HCT116 (cell line): ENCODE measurements at regions of chr2 and their contacts with region 1.

Region 1: DNA sequence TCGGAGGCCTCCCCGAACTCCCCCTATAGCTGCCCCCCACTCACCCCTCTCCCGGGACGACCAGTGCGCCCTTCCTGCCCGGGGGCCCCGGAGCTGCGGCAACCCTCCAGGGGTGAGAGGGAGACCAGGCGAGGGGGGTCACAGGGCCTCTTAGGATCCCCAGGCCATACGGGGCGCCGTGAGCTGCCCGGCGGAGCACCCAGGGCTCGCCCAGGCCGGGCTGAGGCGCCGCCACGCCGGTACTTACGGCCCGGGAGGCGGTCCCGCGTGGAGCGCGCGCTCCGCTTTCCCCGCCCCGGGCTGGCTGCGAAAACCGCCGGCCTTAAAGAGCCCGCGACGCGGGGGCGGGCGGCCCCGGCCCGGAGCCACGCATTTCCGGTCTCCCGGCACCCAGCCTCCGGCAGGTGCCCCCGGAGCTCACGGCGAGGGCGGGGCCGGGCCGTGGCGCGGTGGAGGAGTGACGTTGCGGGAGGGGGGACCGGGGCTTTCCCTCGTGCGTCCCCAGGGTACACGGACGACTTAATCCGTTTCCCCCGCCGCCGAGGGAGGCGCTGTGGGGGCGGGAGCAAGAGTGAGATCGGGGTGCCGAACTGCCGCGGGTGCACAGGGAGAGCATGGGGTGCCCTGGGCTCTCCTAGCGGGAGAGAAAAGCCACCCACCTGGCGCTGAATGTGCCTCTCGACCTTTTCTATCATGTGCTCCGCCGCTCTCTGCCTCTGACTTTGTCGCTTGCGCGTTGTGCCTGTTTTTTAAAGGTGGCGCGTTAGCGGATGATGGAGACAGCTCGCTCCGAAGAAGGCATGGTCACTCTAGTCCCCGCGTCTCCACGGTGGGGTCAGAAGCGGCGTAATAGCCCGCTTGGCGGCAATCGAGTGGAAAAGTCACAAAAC is at the start of gene METTL21A:
- DNase-seq: peak; percentile 77
- ATAC-seq: peak; percentile 72
- H3K4me3 ChIP-seq: peak within 1 kb of the TSS; percentile 79 to 94
- H3K27ac ChIP-seq: peak within 1 kb of the TSS; percentile 88
- H3K4me1 ChIP-seq: peaks cover 8 to 30% of the 10 kb centered on the region in 2 experiments; a peak in 3 of 4 replicates
- H3K27me3 ChIP-seq: no peaks in the 10 kb centered on the region
- CTCF ChIP-seq: peak in 2 of 3 experiments; percentile 14 to 32; a peak in 2 of 6 replicates
- POLR2A ChIP-seq: peak; percentile 45
- RAD21 ChIP-seq: peak; percentile 7; the same call in 1 of the 2 replicates
- total RNA-seq, gene METTL21A: 25.7 TPM

Region 2: DNA sequence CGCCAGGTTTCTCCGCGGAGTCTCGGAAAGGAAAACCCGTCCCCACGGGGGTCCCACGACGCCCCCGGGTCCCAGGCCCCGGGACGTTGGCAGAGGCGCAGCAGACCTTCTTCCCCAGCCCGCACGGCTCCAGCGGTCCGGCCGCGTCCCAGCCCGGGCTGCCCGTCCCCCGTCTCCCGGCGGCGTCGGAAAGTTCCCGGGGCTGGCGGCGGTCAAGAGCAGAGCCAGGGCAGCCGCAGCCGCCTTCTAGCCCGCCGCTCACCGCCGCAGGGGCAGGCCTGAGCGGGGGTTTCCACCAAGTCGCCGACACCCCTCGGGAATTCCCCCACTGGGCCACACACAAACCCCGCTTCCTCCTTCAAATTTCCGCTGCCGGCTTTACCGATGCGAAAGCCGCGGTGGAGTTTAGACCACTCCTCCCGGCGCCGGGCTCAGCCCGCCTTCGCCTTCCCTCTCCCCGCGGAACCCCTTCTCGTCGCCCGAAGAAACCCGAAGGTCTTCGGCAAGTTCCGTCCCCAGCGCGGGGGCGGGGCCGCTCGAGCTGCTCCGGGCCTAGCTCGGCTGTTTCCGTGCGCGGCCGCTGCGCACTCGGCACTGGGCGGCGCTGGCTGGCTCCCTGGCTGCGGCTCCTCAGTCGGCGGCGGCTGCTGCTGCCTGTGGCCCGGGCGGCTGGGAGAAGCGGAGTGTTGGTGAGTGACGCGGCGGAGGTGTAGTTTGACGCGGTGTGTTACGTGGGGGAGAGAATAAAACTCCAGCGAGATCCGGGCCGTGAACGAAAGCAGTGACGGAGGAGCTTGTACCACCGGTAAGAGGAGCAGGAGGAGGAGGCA is 95.7 kb before region 1 on chr2 and contains the start of gene CREB1:
- CTCF ChIA-PET with region 1: no interaction called
- POLR2A ChIA-PET with region 1: interaction called, 5 read pairs
- RAD21 ChIA-PET with region 1: no interaction called
- intact Hi-C with region 1: loop called (anchors 2 kb)
- DNase-seq: peak; percentile 92
- ATAC-seq: peak; percentile 92
- H3K4me3 ChIP-seq: peak within 1 kb of the TSS; percentile 81 to 91
- H3K27ac ChIP-seq: peak within 1 kb of the TSS; percentile 91
- H3K4me1 ChIP-seq: peaks cover 5 to 27% of the 10 kb centered on the region in 2 experiments
- H3K27me3 ChIP-seq: no peaks in the 10 kb centered on the region
- CTCF ChIP-seq: no peak
- POLR2A ChIP-seq: peak; percentile 75
- RAD21 ChIP-seq: peak; percentile 12; the same call in 1 of the 2 replicates
- total RNA-seq, gene CREB1: 60.4 TPM

Region 3: GRCh38 chr2:207725873-207726578 is 100.8 kb after region 1 on chr2:
- CTCF ChIA-PET with region 1: interaction called, 13 read pairs
- POLR2A ChIA-PET with region 1: no interaction called
- RAD21 ChIA-PET with region 1: no interaction called
- intact Hi-C with region 1: loop called (anchors 5 kb)
- DNase-seq: no peak
- ATAC-seq: no peak
- H3K4me3 ChIP-seq: no peak overlapping the region
- H3K27ac ChIP-seq: no peak overlapping the region
- H3K4me1 ChIP-seq: peaks cover 48 to 60% of the 10 kb centered on the region in 2 experiments
- H3K27me3 ChIP-seq: no peaks in the 10 kb centered on the region
- CTCF ChIP-seq: no peak
- POLR2A ChIP-seq: no peak
- RAD21 ChIP-seq: no peak

Region 4: DNA sequence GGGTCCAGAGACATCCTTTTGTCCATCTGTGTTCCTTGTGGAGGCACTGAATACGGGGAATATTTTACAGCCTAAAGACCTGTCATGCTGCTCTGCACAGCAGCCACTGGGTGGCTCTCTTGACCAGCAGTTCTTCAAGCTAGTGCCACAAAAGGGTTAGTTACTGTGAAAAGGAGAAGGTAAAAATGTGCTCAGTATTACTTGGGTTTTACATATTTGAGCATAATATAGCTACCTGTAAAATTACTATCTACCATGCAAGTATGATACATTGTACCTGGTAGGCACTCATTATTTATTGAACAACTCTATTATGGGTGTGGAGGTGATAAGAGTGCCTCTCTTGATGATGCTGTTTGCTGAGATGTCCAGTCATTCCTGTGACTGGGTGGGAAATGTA is 120.9 kb after region 1 on chr2:
- CTCF ChIA-PET with region 1: interaction called, 11 read pairs
- POLR2A ChIA-PET with region 1: no interaction called
- RAD21 ChIA-PET with region 1: no interaction called
- intact Hi-C with region 1: no loop called
- DNase-seq: peak; percentile 54
- ATAC-seq: peak; percentile 97
- H3K4me3 ChIP-seq: no peak overlapping the region
- H3K27ac ChIP-seq: no peak overlapping the region
- H3K4me1 ChIP-seq: no peaks in the 10 kb centered on the region
- H3K27me3 ChIP-seq: no peaks in the 10 kb centered on the region
- CTCF ChIP-seq: peak; percentile 89 to 98 (median 95)
- POLR2A ChIP-seq: no peak
- RAD21 ChIP-seq: peak; percentile 99

Region 5: GRCh38 chr2:208047840-208048239 is 422.6 kb after region 1 on chr2:
- CTCF ChIA-PET with region 1: no interaction called
- POLR2A ChIA-PET with region 1: no interaction called
- RAD21 ChIA-PET with region 1: no interaction called
- intact Hi-C with region 1: no loop called
- DNase-seq: no peak
- ATAC-seq: no peak
- H3K4me3 ChIP-seq: no peak overlapping the region
- H3K27ac ChIP-seq: no peak overlapping the region
- H3K4me1 ChIP-seq: no peaks in the 10 kb centered on the region
- H3K27me3 ChIP-seq: no peaks in the 10 kb centered on the region
- CTCF ChIP-seq: no peak
- POLR2A ChIP-seq: no peak
- RAD21 ChIP-seq: no peak

Region 6: DNA sequence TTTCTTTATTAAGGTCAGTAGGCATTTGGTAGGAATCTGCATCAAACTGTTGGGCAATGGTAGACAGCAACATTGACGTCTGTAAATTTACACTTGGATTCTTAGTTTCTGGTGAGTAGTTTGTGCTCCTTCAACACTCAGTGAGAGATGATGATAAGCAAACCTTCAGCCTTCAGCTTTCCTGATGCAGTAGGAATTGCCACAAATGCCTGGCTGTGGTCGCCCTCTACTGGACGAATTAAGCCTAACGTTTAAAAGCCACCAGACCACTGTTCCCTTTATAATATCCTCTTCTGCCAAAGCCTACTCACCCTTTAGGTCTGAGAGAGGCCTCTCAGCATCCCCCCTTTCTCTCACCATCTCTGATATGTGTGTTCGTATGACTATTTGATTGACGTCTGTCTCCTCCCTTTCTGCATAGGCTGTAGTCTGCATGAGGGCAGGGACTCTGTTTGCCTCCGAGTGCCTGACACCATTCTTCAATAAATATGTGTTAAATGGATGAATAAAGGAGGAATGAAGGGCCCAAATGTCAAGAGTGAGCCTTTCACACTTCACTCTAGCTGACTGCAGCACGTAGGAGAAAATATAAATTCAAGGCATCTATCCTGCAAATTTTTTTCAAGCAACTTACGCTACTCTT is 447.1 kb after region 1 on chr2:
- CTCF ChIA-PET with region 1: no interaction called
- POLR2A ChIA-PET with region 1: no interaction called
- RAD21 ChIA-PET with region 1: no interaction called
- intact Hi-C with region 1: loop called (anchors 1 kb)
- DNase-seq: peak; percentile 57
- ATAC-seq: peak; percentile 98
- H3K4me3 ChIP-seq: no peak overlapping the region
- H3K27ac ChIP-seq: no peak overlapping the region
- H3K4me1 ChIP-seq: no peaks in the 10 kb centered on the region
- H3K27me3 ChIP-seq: no peaks in the 10 kb centered on the region
- CTCF ChIP-seq: peak; percentile 38 to 86 (median 62); a peak in 5 of 6 replicates
- POLR2A ChIP-seq: no peak
- RAD21 ChIP-seq: peak; percentile 87